RWPE1 (cell line): ENCODE measurements at regions of chr5 and their contacts with region 1.

Region 1: GRCh38 chr5:165209086-165209727 is 1703.8 kb downstream of the MAT2B start:
- DNase-seq: peak; percentile 34
- H3K27ac ChIP-seq: no peak overlapping the region
- CTCF ChIP-seq: peak; percentile 89

Region 2: DNA sequence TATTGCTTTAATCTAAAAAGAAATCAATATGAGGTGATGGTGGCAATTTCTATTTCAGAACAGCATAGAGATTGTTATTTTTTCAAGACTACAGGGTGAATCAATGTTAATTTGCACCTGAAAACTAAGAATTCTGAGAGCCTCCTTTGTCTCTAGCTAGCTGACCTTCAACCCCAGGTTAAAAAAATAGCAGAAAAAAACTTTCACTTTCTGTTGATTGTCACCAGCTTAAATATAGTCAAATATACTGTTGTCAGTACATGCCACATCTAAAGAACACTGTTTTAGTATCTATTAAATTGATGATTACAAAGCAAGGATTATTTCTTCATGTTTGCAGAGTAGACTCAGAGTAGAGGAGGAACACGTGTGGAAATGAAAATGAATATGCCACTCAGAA is 332.4 kb before region 1 on chr5:
- CTCF ChIA-PET with region 1: no interaction called
- POLR2A ChIA-PET with region 1: no interaction called
- DNase-seq: no peak
- H3K27ac ChIP-seq: no peak overlapping the region
- CTCF ChIP-seq: no peak

Region 3: GRCh38 chr5:165137701-165138100 is 71.5 kb before region 1 on chr5:
- CTCF ChIA-PET with region 1: interaction called, 11 read pairs
- POLR2A ChIA-PET with region 1: no interaction called
- DNase-seq: no peak
- H3K27ac ChIP-seq: no peak overlapping the region
- CTCF ChIP-seq: no peak

Region 4: GRCh38 chr5:165224366-165225045 is 15.3 kb after region 1 on chr5:
- CTCF ChIA-PET with region 1: no interaction called
- POLR2A ChIA-PET with region 1: no interaction called
- DNase-seq: no peak
- H3K27ac ChIP-seq: no peak overlapping the region
- CTCF ChIP-seq: no peak